MCF 10A (cell line): ENCODE measurements at regions of chr3 and their contacts with region 1.

Region 1: DNA sequence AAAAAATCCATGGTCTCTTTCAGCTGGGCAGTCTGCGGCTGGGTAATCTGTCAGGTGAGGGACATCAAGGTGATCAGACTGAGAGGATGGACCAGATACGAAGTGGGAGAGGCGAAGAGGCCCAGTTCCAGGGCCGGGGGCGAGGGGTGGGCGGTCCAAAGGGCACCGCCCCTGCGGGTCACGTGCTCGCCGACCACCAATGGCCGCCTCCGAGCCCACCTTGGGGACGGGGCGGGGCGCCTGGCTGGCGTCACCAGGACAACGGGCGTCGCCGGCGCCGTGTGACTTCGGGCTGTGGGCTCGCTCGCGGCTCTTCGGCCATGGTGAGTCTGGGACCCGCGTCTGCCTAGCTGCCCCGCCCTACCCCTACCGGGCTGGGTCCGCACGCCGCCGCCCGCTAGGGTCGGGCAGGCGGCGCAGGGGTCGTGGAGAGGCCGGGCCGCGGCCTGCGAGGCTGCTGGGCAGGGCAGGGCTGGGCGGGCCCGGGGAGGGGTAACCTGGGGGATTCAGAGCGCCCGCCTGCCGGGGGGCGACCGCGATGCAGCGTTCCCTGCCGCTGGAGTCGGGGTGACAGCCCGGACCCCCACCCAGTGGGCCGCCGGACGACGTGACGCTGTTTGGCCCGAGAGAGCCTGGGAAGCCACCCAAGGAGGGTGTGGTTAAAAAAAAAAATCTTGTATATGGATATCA is at the start of gene FBXL2:
- DNase-seq: peak; percentile 76
- H3K4me3 Mint-ChIP-seq: peak within 1 kb of the TSS; percentile 75
- H3K27ac Mint-ChIP-seq: peak within 1 kb of the TSS; percentile 85
- H3K4me1 Mint-ChIP-seq: peaks cover 11% of the 10 kb centered on the region
- H3K27me3 Mint-ChIP-seq: no peaks in the 10 kb centered on the region
- CTCF ChIP-seq: no peak
- total RNA-seq, gene FBXL2: 9.6 and 9.8 TPM in 2 replicates

Region 2: GRCh38 chr3:32781210-32781968 is 495.9 kb before region 1 on chr3:
- CTCF ChIA-PET with region 1: no interaction called
- POLR2A ChIA-PET with region 1: no interaction called
- intact Hi-C with region 1: no loop called
- DNase-seq: peak; percentile 76
- H3K4me3 Mint-ChIP-seq: peak overlapping the region; percentile 84
- H3K27ac Mint-ChIP-seq: no peak overlapping the region
- H3K4me1 Mint-ChIP-seq: peaks cover 9% of the 10 kb centered on the region
- H3K27me3 Mint-ChIP-seq: no peaks in the 10 kb centered on the region
- CTCF ChIP-seq: peak; percentile 68

Region 3: DNA sequence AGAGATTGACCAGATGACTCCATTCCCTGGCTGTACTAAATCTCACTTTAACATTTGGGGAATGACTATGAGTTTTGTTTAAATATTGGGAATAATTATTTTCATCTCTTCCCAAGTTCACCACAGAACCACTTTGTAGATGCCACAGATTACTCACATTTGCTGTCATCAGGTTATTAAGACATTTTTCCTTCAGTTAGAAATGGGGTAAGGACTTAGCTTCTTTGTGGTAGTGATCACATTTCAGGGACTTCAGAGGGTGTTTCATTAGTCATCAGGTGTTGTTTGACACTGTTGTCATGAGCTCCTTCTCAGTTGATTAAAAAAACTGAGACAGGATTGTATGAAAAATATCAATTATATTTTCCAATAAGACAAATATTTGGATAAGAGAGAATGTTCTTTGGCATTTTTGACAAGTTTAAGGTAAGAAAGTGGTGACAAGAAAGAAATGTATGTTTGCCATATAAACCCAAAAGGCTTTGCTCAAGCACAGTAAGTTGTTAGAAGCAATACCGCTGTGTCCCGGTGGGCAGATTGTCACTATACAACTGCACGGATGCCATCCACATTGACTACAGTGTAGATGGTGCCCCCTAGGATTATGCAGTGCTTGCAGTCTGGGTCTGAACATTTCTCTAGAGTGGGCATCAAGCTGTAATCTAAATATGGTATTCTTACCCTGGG is 22.2 kb after region 1 on chr3:
- CTCF ChIA-PET with region 1: interaction called, 3 read pairs
- POLR2A ChIA-PET with region 1: interaction called, 34 read pairs
- intact Hi-C with region 1: no loop called
- DNase-seq: peak; percentile 32
- H3K4me3 Mint-ChIP-seq: no peak overlapping the region
- H3K27ac Mint-ChIP-seq: peak overlapping the region; percentile 94
- H3K4me1 Mint-ChIP-seq: peaks cover 19% of the 10 kb centered on the region
- H3K27me3 Mint-ChIP-seq: no peaks in the 10 kb centered on the region
- CTCF ChIP-seq: no peak

Region 4: GRCh38 chr3:33360136-33360825 is 82.9 kb after region 1 on chr3:
- CTCF ChIA-PET with region 1: no interaction called
- POLR2A ChIA-PET with region 1: interaction called, 6 read pairs
- intact Hi-C with region 1: loop called (anchors 5 kb)
- DNase-seq: peak; percentile 54
- H3K4me3 Mint-ChIP-seq: peak overlapping the region; percentile 14
- H3K27ac Mint-ChIP-seq: peak overlapping the region; percentile 70
- H3K4me1 Mint-ChIP-seq: peaks cover 12% of the 10 kb centered on the region
- H3K27me3 Mint-ChIP-seq: no peaks in the 10 kb centered on the region
- CTCF ChIP-seq: no peak